ENCODE measurements at regions of chr17 and their contacts with region 1.

Region 1: DNA sequence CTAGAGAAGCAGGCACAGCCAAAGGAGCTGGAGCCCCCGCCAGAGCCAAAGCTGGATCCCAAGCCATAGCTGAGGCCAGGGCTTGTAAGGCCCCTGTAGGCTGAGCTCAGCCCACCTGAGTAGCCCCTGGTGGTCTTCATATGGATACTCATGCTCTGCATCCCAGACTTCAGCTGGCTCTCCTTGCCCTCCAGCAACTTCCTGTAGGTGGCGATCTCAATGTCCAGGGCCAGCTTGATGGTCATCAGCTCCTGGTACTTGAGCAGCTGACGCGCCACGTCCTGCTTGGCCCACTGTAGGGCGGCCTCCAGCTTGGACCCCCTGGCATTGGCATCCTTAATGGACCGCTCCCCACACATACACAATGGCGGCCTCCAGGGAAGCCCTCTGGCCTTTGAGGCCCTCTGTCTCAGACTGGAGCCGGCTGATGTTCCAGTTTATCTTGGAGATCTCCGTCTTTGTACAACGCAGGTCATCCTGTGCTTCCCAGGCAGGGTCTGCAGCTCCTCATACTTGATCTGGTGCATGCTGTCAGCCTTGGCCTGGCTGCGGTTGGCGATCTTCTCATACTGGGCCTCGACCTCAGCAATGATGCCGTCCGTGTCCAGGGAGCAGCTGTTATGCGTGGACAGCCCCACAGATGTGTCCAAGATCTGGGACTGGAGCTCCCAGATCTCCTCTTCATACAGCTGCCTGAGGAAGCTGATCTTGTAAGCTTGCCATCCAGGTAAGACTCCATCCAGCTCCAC is 28.9 kb downstream of the IKZF3 start:
- DNase-seq: peak; percentile 79
- H3K4me3 Mint-ChIP-seq: no peak overlapping the region
- H3K27ac Mint-ChIP-seq: no peak overlapping the region
- H3K4me1 Mint-ChIP-seq: no peaks in the 10 kb centered on the region
- H3K27me3 Mint-ChIP-seq: no peaks in the 10 kb centered on the region
- CTCF ChIP-seq: no peak

Region 2: GRCh38 chr17:39653662-39654331 is 181.4 kb before region 1 on chr17:
- CTCF ChIA-PET with region 1: interaction called, 59 read pairs
- intact Hi-C with region 1: no loop called
- DNase-seq: peak; percentile 100
- H3K4me3 Mint-ChIP-seq: no peak overlapping the region
- H3K27ac Mint-ChIP-seq: no peak overlapping the region
- H3K4me1 Mint-ChIP-seq: peaks cover 23% of the 10 kb centered on the region
- H3K27me3 Mint-ChIP-seq: no peaks in the 10 kb centered on the region
- CTCF ChIP-seq: no peak

Region 3: DNA sequence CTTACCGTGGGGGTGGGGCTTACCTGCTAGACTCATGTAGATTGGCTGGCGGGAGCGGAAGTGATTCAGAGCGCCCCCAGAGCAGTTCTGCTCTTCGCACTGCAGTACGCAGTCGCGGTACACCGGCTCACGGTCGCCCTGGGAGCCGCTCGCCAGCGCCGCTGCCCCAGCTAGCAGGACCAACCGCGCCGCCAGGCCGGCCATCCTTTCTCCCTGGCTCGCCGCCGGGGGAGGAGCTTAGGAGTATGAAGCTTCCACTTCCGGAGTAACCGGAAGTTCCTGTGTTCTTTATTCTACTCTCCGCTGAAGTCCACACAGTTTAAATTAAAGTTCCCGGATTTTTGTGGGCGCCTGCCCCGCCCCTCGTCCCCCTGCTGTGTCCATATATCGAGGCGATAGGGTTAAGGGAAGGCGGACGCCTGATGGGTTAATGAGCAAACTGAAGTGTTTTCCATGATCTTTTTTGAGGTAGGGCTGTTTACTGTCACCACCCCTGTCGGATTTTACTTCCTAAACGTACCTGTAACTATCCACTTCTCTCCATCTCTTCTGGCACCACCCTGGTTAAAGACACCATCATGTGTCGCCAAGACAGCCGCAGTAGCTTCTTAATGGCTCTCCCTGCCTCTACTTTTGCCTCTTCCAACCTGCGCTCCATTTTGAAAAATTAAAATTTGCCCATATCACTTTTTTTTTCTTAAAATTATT is 147.2 kb before region 1 on chr17 and contains the start of gene PGAP3:
- CTCF ChIA-PET with region 1: interaction called, 78 read pairs
- intact Hi-C with region 1: no loop called
- DNase-seq: peak; percentile 100
- H3K4me3 Mint-ChIP-seq: peak within 1 kb of the TSS; percentile 64
- H3K27ac Mint-ChIP-seq: peak within 1 kb of the TSS; percentile 63
- H3K4me1 Mint-ChIP-seq: peaks cover 27% of the 10 kb centered on the region
- H3K27me3 Mint-ChIP-seq: no peaks in the 10 kb centered on the region
- CTCF ChIP-seq: no peak
- total RNA-seq, gene PGAP3: 1,186 and 1,276 TPM in 2 replicates

Region 4: DNA sequence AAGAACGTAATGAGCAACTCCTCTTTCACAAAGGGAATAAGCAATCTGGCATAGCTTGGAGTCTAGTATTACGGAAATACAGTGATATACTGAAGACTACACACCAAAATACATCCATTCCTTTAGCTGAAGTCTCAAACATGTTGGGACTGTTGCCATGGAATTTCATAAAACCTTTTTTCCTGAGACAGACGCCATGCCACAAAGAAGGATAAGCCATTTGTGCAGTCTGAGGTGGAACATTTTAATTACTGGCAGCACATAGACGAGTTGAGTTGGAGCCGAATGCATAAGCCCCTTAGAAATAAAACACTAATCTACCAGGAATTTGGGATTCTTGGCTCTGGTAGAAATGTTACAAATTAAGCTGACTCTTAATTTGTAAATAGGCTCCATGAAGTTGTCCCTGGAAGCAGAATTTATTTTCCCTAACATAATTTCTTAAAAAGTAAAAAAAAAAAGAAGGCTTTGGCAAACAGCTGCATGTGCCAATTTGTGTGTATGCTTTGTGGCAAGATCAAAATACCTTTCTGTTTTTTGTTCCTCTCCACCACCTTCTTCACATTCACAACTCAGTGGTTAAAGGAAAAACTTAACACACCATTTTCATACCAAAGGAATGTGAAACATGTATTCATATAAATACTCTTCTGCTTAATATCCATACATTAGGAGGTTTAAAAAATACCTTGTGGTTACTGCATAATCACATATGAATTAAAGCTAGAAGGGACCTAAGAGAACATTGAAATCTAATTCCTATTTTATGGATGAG is 72.0 kb before region 1 on chr17:
- CTCF ChIA-PET with region 1: interaction called, 1,211 read pairs
- intact Hi-C with region 1: no loop called
- DNase-seq: no peak
- H3K4me3 Mint-ChIP-seq: no peak overlapping the region
- H3K27ac Mint-ChIP-seq: no peak overlapping the region
- H3K4me1 Mint-ChIP-seq: peaks cover 12% of the 10 kb centered on the region
- H3K27me3 Mint-ChIP-seq: peaks cover 26% of the 10 kb centered on the region
- CTCF ChIP-seq: no peak

Region 5: GRCh38 chr17:39852239-39852638 is 17.0 kb after region 1 on chr17:
- CTCF ChIA-PET with region 1: interaction called, 809 read pairs
- intact Hi-C with region 1: no loop called
- DNase-seq: peak; percentile 59
- H3K4me3 Mint-ChIP-seq: no peak overlapping the region
- H3K27ac Mint-ChIP-seq: no peak overlapping the region
- H3K4me1 Mint-ChIP-seq: peaks cover 10% of the 10 kb centered on the region
- H3K27me3 Mint-ChIP-seq: no peaks in the 10 kb centered on the region
- CTCF ChIP-seq: no peak

Region 6: DNA sequence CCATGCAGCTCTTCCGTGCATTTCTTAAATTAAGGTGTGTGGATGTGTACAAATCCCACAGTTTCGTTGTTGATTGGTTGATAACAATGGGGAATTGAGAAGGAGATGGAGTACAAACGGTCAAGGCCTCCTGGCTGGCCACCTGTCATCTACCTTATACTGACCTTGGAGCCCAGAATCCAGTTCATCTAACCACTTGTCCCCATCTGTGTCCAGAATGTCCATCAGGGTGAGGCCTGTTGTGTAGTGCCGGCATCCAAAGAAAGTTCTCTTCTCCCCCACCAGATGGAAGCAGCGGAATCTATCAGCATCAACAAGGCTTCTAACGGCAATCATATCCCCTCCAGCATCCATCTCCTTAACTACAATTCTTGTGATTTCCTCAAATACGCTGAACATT is 81.7 kb after region 1 on chr17:
- CTCF ChIA-PET with region 1: interaction called, 1,004 read pairs
- intact Hi-C with region 1: no loop called
- DNase-seq: peak; percentile 94
- H3K4me3 Mint-ChIP-seq: no peak overlapping the region
- H3K27ac Mint-ChIP-seq: no peak overlapping the region
- H3K4me1 Mint-ChIP-seq: peaks cover 24% of the 10 kb centered on the region
- H3K27me3 Mint-ChIP-seq: no peaks in the 10 kb centered on the region
- CTCF ChIP-seq: no peak

Region 7: GRCh38 chr17:40699371-40699770 is 864.2 kb after region 1 on chr17:
- CTCF ChIA-PET with region 1: interaction called, 3 read pairs
- intact Hi-C with region 1: loop called (anchors 5 kb)
- DNase-seq: no peak
- H3K4me3 Mint-ChIP-seq: no peak overlapping the region
- H3K27ac Mint-ChIP-seq: no peak overlapping the region
- H3K4me1 Mint-ChIP-seq: peaks cover 46% of the 10 kb centered on the region
- H3K27me3 Mint-ChIP-seq: peaks cover 29% of the 10 kb centered on the region
- CTCF ChIP-seq: no peak

Measured in Calu3 (cell line).